ENCODE measurements at regions of chr3 and their contacts with region 1.

Region 1: DNA sequence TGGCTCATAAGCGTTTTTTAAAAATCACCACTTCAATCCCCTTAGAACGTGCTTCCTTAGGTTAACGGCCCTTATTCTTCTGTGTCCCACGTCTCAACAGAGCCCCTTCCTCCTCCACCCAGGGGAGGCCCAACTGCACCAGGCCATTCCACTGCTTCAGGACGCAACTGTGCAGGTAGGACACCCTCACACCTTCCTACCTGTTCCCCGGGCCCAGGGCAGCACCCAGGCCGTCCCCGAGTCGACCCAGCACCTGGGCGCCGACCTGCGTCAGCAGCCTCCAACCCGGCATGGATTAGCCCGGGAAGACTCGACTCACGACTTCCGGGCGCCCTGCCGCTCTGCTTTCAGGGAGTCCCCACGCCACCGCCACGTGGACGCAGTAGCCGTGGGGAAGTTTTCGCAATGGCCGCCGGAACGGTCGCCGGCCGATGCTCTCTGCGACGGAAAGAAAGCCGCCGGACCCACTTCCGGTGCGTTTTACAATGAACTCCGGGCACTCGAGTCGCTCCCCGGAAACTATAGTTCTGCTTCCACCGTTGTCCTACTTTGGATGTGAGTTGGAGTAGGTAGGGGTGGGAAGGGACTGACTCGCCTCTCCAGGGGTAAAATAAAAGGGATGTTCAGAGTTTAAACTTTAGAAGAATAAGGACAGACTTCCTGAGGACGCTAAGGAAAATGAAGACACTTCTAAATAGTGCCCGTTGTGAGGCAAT is at the start of gene MRPL3:
- DNase-seq: peak; percentile 84 to 92 (median 88)
- ATAC-seq: peak; percentile 98
- H3K4me3 ChIP-seq: peak within 1 kb of the TSS; percentile 60 to 99
- H3K27ac ChIP-seq: peak within 1 kb of the TSS in 3 of 4 donors; percentile 50 to 79 (median 76)
- H3K4me1 ChIP-seq: peaks cover 18% of the 10 kb centered on the region
- H3K27me3 ChIP-seq: no peaks in the 10 kb centered on the region
- CTCF ChIP-seq: no peak
- POLR2A ChIP-seq: peak in 2 of 3 donors; percentile 67 to 74
- total RNA-seq, gene MRPL3: 41.5 to 43.1 TPM

Region 2: DNA sequence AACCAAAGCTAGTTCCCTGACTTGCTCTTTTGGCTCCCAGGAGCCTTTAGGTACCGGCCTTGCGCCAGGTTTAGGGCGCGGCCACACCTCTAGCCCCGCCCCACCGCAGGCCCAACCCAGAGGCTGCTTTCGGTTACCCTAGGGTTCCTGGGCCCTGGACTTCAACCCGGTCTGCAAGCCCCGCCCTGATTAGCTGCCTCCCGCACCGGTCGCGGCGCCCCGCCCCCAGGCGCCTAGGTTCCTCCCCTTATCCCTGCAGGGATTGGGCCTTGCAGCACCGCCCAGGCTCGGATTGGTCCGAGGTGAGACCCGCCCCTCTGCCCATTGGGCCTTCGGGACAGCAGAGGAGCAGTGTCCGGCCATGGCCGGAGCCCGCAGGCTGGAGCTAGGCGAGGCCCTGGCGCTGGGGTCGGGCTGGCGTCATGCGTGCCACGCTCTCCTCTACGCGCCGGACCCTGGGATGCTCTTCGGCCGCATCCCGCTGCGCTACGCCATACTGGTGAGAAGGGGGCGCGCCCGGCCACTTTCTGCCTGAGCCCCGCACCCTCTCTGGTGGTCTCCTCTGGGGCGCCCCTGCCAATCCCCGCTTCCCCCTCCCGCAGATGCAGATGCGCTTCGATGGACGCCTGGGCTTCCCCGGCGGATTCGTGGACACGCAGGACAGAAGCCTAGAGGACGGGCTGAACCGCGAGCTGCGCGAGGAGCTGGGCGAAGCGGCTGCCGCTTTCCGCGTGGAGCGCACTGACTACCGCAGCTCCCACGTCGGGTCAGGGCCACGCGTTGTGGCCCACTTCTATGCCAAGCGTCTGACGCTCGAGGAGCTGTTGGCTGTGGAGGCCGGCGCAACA is 121.0 kb before region 1 on chr3 and contains the start of gene NUDT16:
- intact Hi-C with region 1: loop called (anchors 10 kb)
- DNase-seq: peak; percentile 100
- ATAC-seq: peak; percentile 97
- H3K4me3 ChIP-seq: peak within 1 kb of the TSS; percentile 53 to 82
- H3K27ac ChIP-seq: peak within 1 kb of the TSS; percentile 78 to 94 (median 86)
- H3K4me1 ChIP-seq: peaks cover 26% of the 10 kb centered on the region
- H3K27me3 ChIP-seq: no peaks in the 10 kb centered on the region
- CTCF ChIP-seq: peak in 1 of 7 experiments; percentile 4
- POLR2A ChIP-seq: peak; percentile 95 to 98 (median 97)
- total RNA-seq, gene NUDT16: 13.2 to 27.4 TPM

Region 3: DNA sequence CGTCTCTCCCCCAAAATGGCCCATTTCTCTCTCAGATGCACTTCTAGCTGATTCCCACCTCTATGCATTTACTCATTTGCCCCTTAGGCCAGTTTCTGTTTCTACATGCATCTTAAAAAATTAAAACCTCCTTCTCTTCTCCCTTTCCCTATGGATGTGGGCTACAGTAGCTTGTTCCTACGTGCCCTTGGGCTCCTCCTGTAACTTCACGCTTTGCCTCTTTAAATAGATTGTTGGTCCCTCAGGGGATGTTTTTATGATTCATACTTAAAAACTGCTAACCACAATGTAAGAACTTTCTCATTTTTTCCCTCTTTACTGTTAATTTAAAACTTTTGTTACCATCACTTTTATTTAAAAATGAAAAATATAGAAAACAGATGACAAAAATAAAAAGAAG is 185.7 kb after region 1 on chr3:
- intact Hi-C with region 1: no loop called
- DNase-seq: no peak
- ATAC-seq: no peak
- H3K4me3 ChIP-seq: no peak overlapping the region
- H3K27ac ChIP-seq: no peak overlapping the region
- H3K4me1 ChIP-seq: no peaks in the 10 kb centered on the region
- H3K27me3 ChIP-seq: no peaks in the 10 kb centered on the region
- CTCF ChIP-seq: no peak
- POLR2A ChIP-seq: no peak

Measured in body of pancreas (tissue), 4 donors.